Naive thymus-derived CD4-positive, alpha-beta T cell (primary cell): ENCODE measurements at regions of chr14 and their contacts with region 1.

Region 1: GRCh38 chr14:61342486-61342885 is 21.1 kb downstream of the PRKCH start:
- DNase-seq: peak; percentile 46 to 91 (median 87)
- ATAC-seq: peak; percentile 76
- H3K4me3 ChIP-seq: peak overlapping the region; percentile 28
- H3K4me3 Mint-ChIP-seq: peak overlapping the region; percentile 76 to 97 (median 82)
- H3K27ac ChIP-seq: peak overlapping the region; percentile 76
- H3K27ac Mint-ChIP-seq: peak overlapping the region in 8 of 9 donors; percentile 92 to 100 (median 98)
- H3K4me1 ChIP-seq: peaks cover 92% of the 10 kb centered on the region in 2 donors
- H3K4me1 Mint-ChIP-seq: peaks cover 18 to 94% (median 82%) of the 10 kb centered on the region in 7 donors
- H3K27me3 ChIP-seq: no peaks in the 10 kb centered on the region
- H3K27me3 Mint-ChIP-seq: no peaks in the 10 kb centered on the region

Region 2: GRCh38 chr14:61160798-61161197 is 181.7 kb before region 1 on chr14:
- CTCF ChIA-PET with region 1: no interaction called
- POLR2A ChIA-PET with region 1: no interaction called
- intact Hi-C with region 1: no loop called
- DNase-seq: no peak
- ATAC-seq: no peak
- H3K4me3 ChIP-seq: no peak overlapping the region
- H3K4me3 Mint-ChIP-seq: no peak overlapping the region
- H3K27ac ChIP-seq: no peak overlapping the region
- H3K27ac Mint-ChIP-seq: no peak overlapping the region
- H3K4me1 ChIP-seq: no peaks in the 10 kb centered on the region
- H3K4me1 Mint-ChIP-seq: no peaks in the 10 kb centered on the region
- H3K27me3 ChIP-seq: no peaks in the 10 kb centered on the region
- H3K27me3 Mint-ChIP-seq: peaks cover 13 to 30% (median 24%) of the 10 kb centered on the region in 5 donors

Region 3: DNA sequence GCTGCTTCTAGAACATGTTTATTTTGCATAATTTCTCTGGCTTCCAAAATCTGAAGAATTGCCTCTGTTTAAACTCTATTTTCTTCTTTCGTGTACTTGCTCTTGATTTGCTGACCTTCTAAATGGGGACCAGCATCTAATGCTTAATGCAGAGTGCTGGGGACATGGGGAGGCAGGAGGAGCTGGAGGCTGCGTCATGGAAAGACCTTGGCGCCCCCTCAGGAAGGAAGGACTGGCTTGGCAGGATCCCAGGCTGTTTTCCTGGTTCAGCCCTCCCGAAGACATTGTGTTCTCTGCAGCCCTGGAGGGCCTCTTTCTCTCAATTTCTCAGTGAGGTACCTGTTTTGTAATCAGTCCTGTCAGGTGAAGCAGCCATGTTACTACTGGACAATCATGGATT is 15.6 kb before region 1 on chr14:
- CTCF ChIA-PET with region 1: interaction called, 8 read pairs
- POLR2A ChIA-PET with region 1: interaction called, 214 read pairs
- intact Hi-C with region 1: loop called (anchors 1 kb)
- DNase-seq: no peak
- ATAC-seq: no peak
- H3K4me3 ChIP-seq: peak overlapping the region; percentile 90
- H3K4me3 Mint-ChIP-seq: peak overlapping the region in 9 of 10 donors; percentile 75 to 99 (median 98)
- H3K27ac ChIP-seq: peak overlapping the region; percentile 91
- H3K27ac Mint-ChIP-seq: peak overlapping the region in 8 of 9 donors; percentile 78 to 99 (median 89)
- H3K4me1 ChIP-seq: peaks cover 37 to 60% of the 10 kb centered on the region in 2 donors
- H3K4me1 Mint-ChIP-seq: peaks cover 40 to 71% (median 64%) of the 10 kb centered on the region in 7 donors
- H3K27me3 ChIP-seq: no peaks in the 10 kb centered on the region
- H3K27me3 Mint-ChIP-seq: no peaks in the 10 kb centered on the region

Region 4: GRCh38 chr14:61368114-61368726 is 25.7 kb after region 1 on chr14:
- CTCF ChIA-PET with region 1: no interaction called
- POLR2A ChIA-PET with region 1: interaction called, 4 read pairs
- intact Hi-C with region 1: loop called in 1 of 2 experiments (anchors 1 kb)
- DNase-seq: no peak
- ATAC-seq: no peak
- H3K4me3 ChIP-seq: no peak overlapping the region
- H3K4me3 Mint-ChIP-seq: peak overlapping the region in 7 of 10 donors; percentile 27 to 81 (median 68)
- H3K27ac ChIP-seq: peak overlapping the region; percentile 50
- H3K27ac Mint-ChIP-seq: peak overlapping the region in 5 of 9 donors; percentile 25 to 93 (median 75)
- H3K4me1 ChIP-seq: peaks cover 72 to 91% of the 10 kb centered on the region in 2 donors
- H3K4me1 Mint-ChIP-seq: peaks cover 0 to 54% (median 33%) of the 10 kb centered on the region in 7 donors
- H3K27me3 ChIP-seq: no peaks in the 10 kb centered on the region
- H3K27me3 Mint-ChIP-seq: no peaks in the 10 kb centered on the region

Region 5: DNA sequence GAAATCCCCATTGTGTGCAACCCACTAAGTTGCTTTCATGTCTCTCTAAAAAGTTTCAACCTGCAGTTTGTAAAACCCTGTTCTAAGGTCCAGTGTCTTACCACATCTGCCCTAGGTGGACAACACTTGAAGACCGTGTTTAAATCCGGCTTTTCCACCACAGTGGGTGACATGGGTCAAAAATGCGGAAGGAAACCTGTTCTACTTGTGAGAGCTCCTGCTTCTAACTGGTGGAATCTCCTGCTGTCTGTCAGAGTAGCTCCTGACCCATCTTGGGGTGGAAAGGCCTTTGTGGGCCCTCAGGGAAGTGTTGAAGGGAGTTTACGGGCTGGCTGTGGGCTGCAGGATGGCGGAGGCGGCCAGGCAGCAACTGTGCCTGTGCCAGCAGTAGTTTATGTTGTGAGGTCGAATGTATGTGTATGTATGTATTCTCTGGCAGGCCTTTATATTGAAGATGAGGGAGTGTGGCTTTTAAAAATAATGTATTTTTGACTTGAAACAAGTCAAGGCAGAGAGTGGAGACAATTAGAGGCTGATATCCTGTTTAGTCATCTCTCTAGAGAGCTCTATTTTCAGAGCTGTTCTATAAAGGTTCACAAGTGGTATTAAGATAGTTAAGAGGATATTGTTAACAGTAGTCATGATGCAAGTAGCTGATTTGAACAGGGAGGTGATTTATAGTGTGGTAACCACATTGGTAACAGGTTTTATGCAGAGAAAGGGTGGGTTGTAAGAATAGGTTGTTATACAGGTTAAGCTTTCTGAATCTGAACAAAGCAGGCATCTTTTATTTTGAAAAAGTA is 45.9 kb after region 1 on chr14:
- CTCF ChIA-PET with region 1: interaction called, 7 read pairs
- POLR2A ChIA-PET with region 1: interaction called, 8 read pairs
- intact Hi-C with region 1: loop called (anchors 1 kb)
- DNase-seq: peak in 6 of 9 donors; percentile 38 to 56 (median 50)
- ATAC-seq: peak; percentile 76
- H3K4me3 ChIP-seq: peak overlapping the region; percentile 50
- H3K4me3 Mint-ChIP-seq: peak overlapping the region in 1 of 10 donors; percentile 74
- H3K27ac ChIP-seq: peak overlapping the region; percentile 71
- H3K27ac Mint-ChIP-seq: no peak overlapping the region
- H3K4me1 ChIP-seq: peaks cover 93 to 96% of the 10 kb centered on the region in 2 donors
- H3K4me1 Mint-ChIP-seq: peaks cover 0 to 46% (median 12%) of the 10 kb centered on the region in 7 donors
- H3K27me3 ChIP-seq: no peaks in the 10 kb centered on the region
- H3K27me3 Mint-ChIP-seq: no peaks in the 10 kb centered on the region

Region 6: DNA sequence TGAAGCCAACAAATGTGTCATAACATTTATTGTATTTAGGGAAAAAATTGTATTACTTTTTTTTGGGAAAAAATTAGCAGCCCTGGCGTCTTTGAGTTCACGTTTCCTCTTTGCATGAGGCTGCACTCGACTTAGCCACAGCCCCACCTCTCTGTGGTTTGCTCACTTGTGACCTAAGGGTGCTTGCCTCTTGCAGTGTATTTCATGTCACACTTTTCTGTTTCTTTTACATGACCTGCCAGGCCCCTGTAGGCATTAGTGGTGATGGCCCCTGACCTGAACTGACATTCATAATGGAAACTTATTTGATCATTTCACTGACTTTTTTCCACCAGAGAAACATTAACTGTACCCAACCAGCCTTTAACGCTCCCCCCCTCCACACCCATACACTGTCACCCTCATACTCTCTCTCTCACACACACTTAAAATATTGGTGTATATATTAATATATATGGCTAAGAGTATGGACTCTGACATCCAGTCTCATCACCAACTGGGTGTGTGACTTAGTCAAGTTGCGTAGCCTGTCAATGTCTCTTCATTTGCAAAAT is 101.8 kb after region 1 on chr14:
- CTCF ChIA-PET with region 1: no interaction called
- POLR2A ChIA-PET with region 1: interaction called, 3 read pairs
- intact Hi-C with region 1: loop called in 1 of 2 experiments (anchors 1 kb)
- DNase-seq: peak in 8 of 9 donors; percentile 36 to 77 (median 54)
- ATAC-seq: peak; percentile 89
- H3K4me3 ChIP-seq: peak overlapping the region; percentile 9
- H3K4me3 Mint-ChIP-seq: peak overlapping the region; percentile 61 to 89 (median 82)
- H3K27ac ChIP-seq: peak overlapping the region; percentile 59
- H3K27ac Mint-ChIP-seq: peak overlapping the region in 8 of 9 donors; percentile 86 to 97 (median 92)
- H3K4me1 ChIP-seq: peaks cover 77 to 90% of the 10 kb centered on the region in 2 donors
- H3K4me1 Mint-ChIP-seq: peaks cover 56 to 99% (median 93%) of the 10 kb centered on the region in 7 donors
- H3K27me3 ChIP-seq: no peaks in the 10 kb centered on the region
- H3K27me3 Mint-ChIP-seq: no peaks in the 10 kb centered on the region

Region 7: DNA sequence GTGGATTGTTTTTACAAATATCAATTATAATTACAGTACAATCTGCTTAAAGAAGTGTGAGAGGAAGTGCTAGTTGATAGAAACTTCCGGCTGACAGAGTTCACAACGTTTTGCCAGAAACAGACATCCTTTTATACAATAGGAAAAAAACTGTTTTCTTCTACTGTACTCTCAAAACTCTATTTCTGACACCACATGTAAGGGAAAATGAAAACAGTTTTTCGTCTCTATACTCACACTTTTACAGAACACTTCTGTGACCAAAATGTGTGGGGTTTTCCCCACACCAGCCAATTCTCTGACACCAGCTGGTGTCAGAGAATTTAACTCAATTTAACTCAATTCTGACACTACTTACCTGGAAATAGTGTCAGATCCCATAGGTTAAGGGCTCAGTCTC is 328.6 kb after region 1 on chr14:
- CTCF ChIA-PET with region 1: interaction called, 4 read pairs
- POLR2A ChIA-PET with region 1: no interaction called
- intact Hi-C with region 1: loop called in 1 of 2 experiments (anchors 5 kb)
- DNase-seq: peak in 7 of 9 donors; percentile 67 to 87 (median 82)
- ATAC-seq: peak; percentile 97
- H3K4me3 ChIP-seq: peak overlapping the region; percentile 24
- H3K4me3 Mint-ChIP-seq: peak overlapping the region in 1 of 10 donors; percentile 68
- H3K27ac ChIP-seq: peak overlapping the region; percentile 85
- H3K27ac Mint-ChIP-seq: no peak overlapping the region
- H3K4me1 ChIP-seq: peaks cover 29 to 66% of the 10 kb centered on the region in 2 donors
- H3K4me1 Mint-ChIP-seq: peaks cover 5 to 23% (median 18%) of the 10 kb centered on the region in 7 donors
- H3K27me3 ChIP-seq: no peaks in the 10 kb centered on the region
- H3K27me3 Mint-ChIP-seq: no peaks in the 10 kb centered on the region